ENCODE measurements at regions of chr1 and their contacts with region 1.

Region 1: GRCh38 chr1:116139592-116140134 is 28.5 kb downstream of the MAB21L3 start:
- DNase-seq: no peak
- ATAC-seq: no peak
- H3K4me3 ChIP-seq: no peak overlapping the region
- H3K27ac ChIP-seq: no peak overlapping the region
- H3K4me1 ChIP-seq: no peaks in the 10 kb centered on the region
- H3K27me3 ChIP-seq: no peaks in the 10 kb centered on the region
- CTCF ChIP-seq: no peak

Region 2: GRCh38 chr1:116218990-116219321 is 79.3 kb after region 1 on chr1:
- CTCF ChIA-PET with region 1: no interaction called
- POLR2A ChIA-PET with region 1: no interaction called
- in situ Hi-C with region 1: no loop called
- intact Hi-C with region 1: no loop called
- DNase-seq: no peak
- ATAC-seq: no peak
- H3K4me3 ChIP-seq: no peak overlapping the region
- H3K27ac ChIP-seq: no peak overlapping the region
- H3K4me1 ChIP-seq: no peaks in the 10 kb centered on the region
- H3K27me3 ChIP-seq: no peaks in the 10 kb centered on the region
- CTCF ChIP-seq: no peak

Region 3: DNA sequence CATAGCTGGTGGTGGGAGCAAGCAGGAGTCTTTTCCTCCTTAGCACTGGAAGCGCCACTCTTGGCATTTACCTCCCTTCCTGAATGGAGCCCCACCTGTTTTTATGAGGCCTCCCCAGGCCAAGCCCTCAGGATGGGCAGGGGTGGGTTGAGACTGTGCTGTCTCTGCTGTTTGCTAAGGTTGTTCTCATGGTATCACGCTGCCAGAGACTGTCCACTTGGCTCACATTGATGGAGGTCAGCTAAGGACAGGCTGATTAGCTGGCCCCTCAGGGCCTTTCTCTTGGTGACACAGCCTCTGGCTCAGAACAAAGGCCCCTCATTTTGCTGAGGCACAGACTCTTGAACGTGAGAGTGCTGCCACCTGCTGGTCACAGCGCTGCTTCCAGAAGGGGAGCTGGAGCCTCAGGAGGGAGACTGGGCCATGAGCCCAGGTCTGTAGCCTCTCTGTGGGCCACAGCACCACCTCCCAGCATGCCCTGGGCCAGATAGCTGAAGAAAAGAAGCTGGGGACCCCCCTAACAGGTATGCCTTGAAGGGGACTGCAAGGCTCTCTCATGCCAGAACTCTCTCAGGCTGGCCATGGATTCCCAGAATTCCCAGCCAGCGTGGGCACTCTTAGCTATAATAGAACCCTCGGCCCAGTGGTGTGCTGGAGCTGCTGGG is 345.5 kb after region 1 on chr1:
- CTCF ChIA-PET with region 1: interaction called, 32 read pairs
- POLR2A ChIA-PET with region 1: no interaction called
- in situ Hi-C with region 1: no loop called
- intact Hi-C with region 1: no loop called
- DNase-seq: no peak
- ATAC-seq: peak; percentile 92
- H3K4me3 ChIP-seq: no peak overlapping the region
- H3K27ac ChIP-seq: no peak overlapping the region
- H3K4me1 ChIP-seq: no peaks in the 10 kb centered on the region
- H3K27me3 ChIP-seq: no peaks in the 10 kb centered on the region
- CTCF ChIP-seq: peak; percentile 82

Region 4: GRCh38 chr1:116498789-116499628 is 359.3 kb after region 1 on chr1:
- CTCF ChIA-PET with region 1: interaction called, 18 read pairs
- POLR2A ChIA-PET with region 1: no interaction called
- in situ Hi-C with region 1: no loop called
- intact Hi-C with region 1: loop called (anchors 5 kb)
- DNase-seq: no peak
- ATAC-seq: peak; percentile 88
- H3K4me3 ChIP-seq: no peak overlapping the region
- H3K27ac ChIP-seq: no peak overlapping the region
- H3K4me1 ChIP-seq: no peaks in the 10 kb centered on the region
- H3K27me3 ChIP-seq: no peaks in the 10 kb centered on the region
- CTCF ChIP-seq: peak; percentile 78

Measured in Panc1 (cell line).